ENCODE measurements at regions of chr6 and their contacts with region 1.

Region 1: DNA sequence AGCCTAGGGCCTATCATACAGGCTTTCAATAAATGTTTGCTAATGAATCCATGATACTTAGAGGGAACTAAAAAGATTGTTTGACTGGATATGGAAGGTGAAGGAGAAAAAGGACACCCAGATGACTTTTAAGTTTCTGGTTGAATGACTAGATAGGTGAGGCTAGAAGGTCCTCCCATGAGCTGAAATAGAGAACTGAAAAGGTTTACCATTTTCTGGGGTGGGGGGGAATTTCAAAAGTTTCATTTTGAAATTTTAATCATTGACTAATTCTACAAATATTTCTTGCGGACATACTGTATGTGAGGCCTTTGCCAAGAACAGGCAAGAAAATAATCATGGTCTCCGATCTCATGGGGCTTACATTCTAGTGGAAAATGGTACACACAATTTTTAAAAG is 17.9 kb upstream of the ZBTB2 start:
- DNase-seq: no peak
- H3K4me3 ChIP-seq: no peak overlapping the region
- H3K27ac ChIP-seq: no peak overlapping the region
- H3K4me1 ChIP-seq: no peaks in the 10 kb centered on the region
- H3K27me3 ChIP-seq: no peaks in the 10 kb centered on the region
- CTCF ChIP-seq: no peak

Region 2: GRCh38 chr6:150435832-150436231 is 973.4 kb before region 1 on chr6:
- intact Hi-C with region 1: no loop called
- DNase-seq: no peak
- H3K4me3 ChIP-seq: no peak overlapping the region
- H3K27ac ChIP-seq: no peak overlapping the region
- H3K4me1 ChIP-seq: no peaks in the 10 kb centered on the region
- H3K27me3 ChIP-seq: no peaks in the 10 kb centered on the region
- CTCF ChIP-seq: no peak

Region 3: DNA sequence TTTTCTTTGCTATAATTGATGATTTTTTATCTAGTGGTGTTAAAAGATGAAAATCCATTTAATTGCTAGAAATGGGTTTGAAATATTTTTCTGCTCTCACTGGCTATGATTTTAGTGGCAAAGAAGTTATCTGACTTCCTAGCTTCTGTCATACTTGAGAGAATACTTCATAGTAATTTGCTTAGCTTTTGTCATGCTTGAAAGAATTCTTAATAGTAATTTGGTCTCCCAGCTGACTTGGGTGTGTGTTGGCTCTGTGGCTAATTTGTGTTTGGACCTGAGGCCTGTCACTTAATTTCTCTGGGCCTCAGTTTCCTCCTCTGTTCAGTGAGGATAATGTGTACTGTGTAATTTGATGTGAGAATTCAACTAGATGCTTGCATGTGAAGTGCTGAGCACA is 55.4 kb after region 1 on chr6:
- intact Hi-C with region 1: no loop called
- DNase-seq: no peak
- H3K4me3 ChIP-seq: no peak overlapping the region
- H3K27ac ChIP-seq: no peak overlapping the region
- H3K4me1 ChIP-seq: no peaks in the 10 kb centered on the region
- H3K27me3 ChIP-seq: no peaks in the 10 kb centered on the region
- CTCF ChIP-seq: no peak

Region 4: DNA sequence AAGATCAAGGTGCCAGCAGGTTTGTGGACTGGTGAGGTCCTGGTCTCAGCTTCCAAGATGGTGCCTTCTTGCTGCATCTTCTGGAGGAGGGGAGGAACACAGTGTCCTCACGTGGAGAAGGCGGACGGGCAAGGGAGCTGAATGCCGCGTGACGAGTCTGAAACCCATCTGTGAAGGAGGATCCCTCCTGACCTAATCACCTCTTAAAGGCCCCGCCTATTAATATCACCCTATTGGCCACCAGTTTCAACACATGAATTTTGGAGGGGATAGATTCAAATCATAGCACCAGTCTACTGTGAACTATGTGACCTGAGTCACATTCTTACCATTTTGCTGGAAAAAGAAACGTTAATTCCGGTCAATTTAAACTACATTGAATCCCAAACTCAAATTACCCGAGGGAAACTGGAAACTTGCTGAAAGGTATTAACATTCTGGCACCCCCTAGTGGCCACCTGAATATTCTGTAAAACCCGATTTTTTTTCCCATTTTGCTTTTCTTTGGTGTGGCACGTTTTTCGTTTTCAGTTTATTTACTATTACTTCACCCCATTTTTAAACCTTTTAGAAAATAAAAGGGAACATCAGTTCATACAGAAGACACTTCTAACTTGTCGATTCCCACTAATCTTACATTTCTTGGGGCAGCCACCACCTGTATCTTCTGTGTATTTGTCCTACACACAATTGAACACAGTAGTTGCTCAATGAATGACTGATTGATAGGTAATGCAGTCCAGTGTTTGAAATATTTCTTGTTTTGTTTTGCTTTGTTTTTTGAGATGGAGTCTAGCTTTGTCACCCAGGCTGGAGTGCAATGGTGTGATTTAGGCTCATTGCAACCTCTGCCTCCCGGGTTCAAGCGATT is 66.6 kb after region 1 on chr6:
- intact Hi-C with region 1: loop called (anchors 5 kb)
- DNase-seq: peak; percentile 52
- H3K4me3 ChIP-seq: no peak overlapping the region
- H3K27ac ChIP-seq: no peak overlapping the region
- H3K4me1 ChIP-seq: no peaks in the 10 kb centered on the region
- H3K27me3 ChIP-seq: no peaks in the 10 kb centered on the region
- CTCF ChIP-seq: peak; percentile 76

Region 5: GRCh38 chr6:151627705-151628455 is 218.6 kb after region 1 on chr6:
- intact Hi-C with region 1: no loop called
- DNase-seq: no peak
- H3K4me3 ChIP-seq: no peak overlapping the region
- H3K27ac ChIP-seq: no peak overlapping the region
- H3K4me1 ChIP-seq: no peaks in the 10 kb centered on the region
- H3K27me3 ChIP-seq: no peaks in the 10 kb centered on the region
- CTCF ChIP-seq: no peak

Measured in colonic mucosa (tissue), 4 donors.